Calu3 (cell line): ENCODE measurements at regions of chr5 and their contacts with region 1.

Region 1: GRCh38 chr5:127925916-127926315 is 157.7 kb upstream of the SLC12A2 start:
- DNase-seq: peak; percentile 65
- H3K4me3 Mint-ChIP-seq: no peak overlapping the region
- H3K27ac Mint-ChIP-seq: peak overlapping the region; percentile 90
- H3K4me1 Mint-ChIP-seq: peaks cover 92% of the 10 kb centered on the region
- H3K27me3 Mint-ChIP-seq: no peaks in the 10 kb centered on the region
- CTCF ChIP-seq: no peak

Region 2: GRCh38 chr5:127602481-127602880 is 323.4 kb before region 1 on chr5:
- CTCF ChIA-PET with region 1: no interaction called
- intact Hi-C with region 1: no loop called
- DNase-seq: no peak
- H3K4me3 Mint-ChIP-seq: no peak overlapping the region
- H3K27ac Mint-ChIP-seq: no peak overlapping the region
- H3K4me1 Mint-ChIP-seq: no peaks in the 10 kb centered on the region
- H3K27me3 Mint-ChIP-seq: peaks cover 19% of the 10 kb centered on the region
- CTCF ChIP-seq: no peak

Region 3: DNA sequence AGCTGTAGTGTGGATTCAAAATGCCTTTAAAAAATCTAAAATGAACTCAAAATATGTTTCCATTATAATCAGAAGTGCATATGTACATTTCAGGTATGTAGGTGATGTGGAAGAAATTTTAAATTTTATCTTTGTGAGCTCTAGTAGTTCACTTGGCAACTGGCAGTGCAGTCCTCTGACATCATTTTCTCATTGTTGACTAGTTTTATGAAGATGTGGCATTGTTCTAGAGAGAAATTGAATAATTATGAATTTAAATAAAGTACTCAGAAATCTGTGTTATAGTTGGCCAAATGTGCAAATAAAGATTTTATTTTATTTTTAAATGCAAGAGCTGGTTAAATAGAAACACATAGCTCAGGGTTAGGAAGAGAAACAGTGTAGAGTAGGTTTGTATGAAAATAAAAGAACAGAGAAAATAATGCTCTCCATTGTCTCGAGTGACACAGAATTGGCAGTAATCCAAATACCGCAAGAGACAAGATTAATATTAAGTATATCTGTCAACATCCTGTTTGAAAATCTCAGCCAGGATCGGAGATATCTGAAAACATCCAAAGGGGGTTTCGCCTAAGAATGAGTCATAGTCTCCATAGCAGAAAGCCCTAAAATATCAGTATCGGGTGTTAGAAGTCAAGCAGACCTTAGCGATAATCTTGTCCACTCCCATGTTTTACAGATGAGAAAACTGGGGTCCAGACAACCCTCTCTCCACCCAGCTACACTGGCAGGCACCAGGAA is 33.3 kb before region 1 on chr5:
- CTCF ChIA-PET with region 1: interaction called, 14 read pairs
- intact Hi-C with region 1: no loop called
- DNase-seq: peak; percentile 55
- H3K4me3 Mint-ChIP-seq: peak overlapping the region; percentile 28
- H3K27ac Mint-ChIP-seq: peak overlapping the region; percentile 57
- H3K4me1 Mint-ChIP-seq: peaks cover 44% of the 10 kb centered on the region
- H3K27me3 Mint-ChIP-seq: no peaks in the 10 kb centered on the region
- CTCF ChIP-seq: no peak

Region 4: GRCh38 chr5:127909078-127909477 is 16.8 kb before region 1 on chr5:
- CTCF ChIA-PET with region 1: interaction called, 11 read pairs
- intact Hi-C with region 1: loop called (anchors 2 kb)
- DNase-seq: peak; percentile 71
- H3K4me3 Mint-ChIP-seq: no peak overlapping the region
- H3K27ac Mint-ChIP-seq: peak overlapping the region; percentile 83
- H3K4me1 Mint-ChIP-seq: peaks cover 61% of the 10 kb centered on the region
- H3K27me3 Mint-ChIP-seq: no peaks in the 10 kb centered on the region
- CTCF ChIP-seq: peak; percentile 72

Region 5: DNA sequence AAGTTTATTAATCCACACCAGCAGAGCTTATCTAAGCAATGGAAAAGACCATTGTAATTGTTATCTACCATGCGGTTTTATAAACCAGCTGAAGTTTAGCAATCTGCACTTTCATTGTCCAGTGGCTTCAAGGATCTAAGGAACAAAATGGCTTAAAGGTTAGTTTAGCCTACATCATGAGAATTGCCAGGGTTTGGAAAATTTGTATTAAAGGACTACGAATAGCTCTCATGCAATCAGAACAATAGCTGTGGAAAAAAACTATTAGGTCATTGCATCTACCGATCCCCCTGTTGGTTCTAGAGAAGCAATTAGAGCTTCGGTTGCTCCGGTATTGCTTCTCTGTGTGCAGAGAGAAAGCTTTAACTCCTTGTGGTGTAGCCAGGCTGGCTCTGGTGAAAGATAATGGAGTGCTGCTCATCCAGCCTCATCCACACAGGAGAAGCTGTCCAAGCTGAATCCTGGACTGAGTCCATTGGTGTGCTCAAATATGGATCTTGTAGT is 71.3 kb after region 1 on chr5:
- CTCF ChIA-PET with region 1: no interaction called
- intact Hi-C with region 1: no loop called
- DNase-seq: no peak
- H3K4me3 Mint-ChIP-seq: peak overlapping the region; percentile 24
- H3K27ac Mint-ChIP-seq: peak overlapping the region; percentile 51
- H3K4me1 Mint-ChIP-seq: peaks cover 53% of the 10 kb centered on the region
- H3K27me3 Mint-ChIP-seq: no peaks in the 10 kb centered on the region
- CTCF ChIP-seq: no peak

Region 6: GRCh38 chr5:128083033-128083810 is 157.3 kb after region 1 on chr5 and contains the start of gene SLC12A2:
- CTCF ChIA-PET with region 1: no interaction called
- intact Hi-C with region 1: loop called (anchors 5 kb)
- DNase-seq: peak; percentile 92
- H3K4me3 Mint-ChIP-seq: peak within 1 kb of the TSS; percentile 91
- H3K27ac Mint-ChIP-seq: peak within 1 kb of the TSS; percentile 87
- H3K4me1 Mint-ChIP-seq: peaks cover 51% of the 10 kb centered on the region
- H3K27me3 Mint-ChIP-seq: no peaks in the 10 kb centered on the region
- CTCF ChIP-seq: no peak
- total RNA-seq, gene SLC12A2: 393 and 576 TPM in 2 replicates